Motor neuron (in vitro differentiated cells): ENCODE measurements at regions of chr16 and their contacts with region 1.

Region 1: GRCh38 chr16:52773026-52773425 is 226.1 kb upstream of the TOX3 start:
- ATAC-seq: no peak
- H3K4me3 ChIP-seq: no peak overlapping the region
- H3K27ac ChIP-seq: no peak overlapping the region
- H3K4me1 ChIP-seq: peaks cover 0 to 6% of the 10 kb centered on the region in 2 donors

Region 2: GRCh38 chr16:52861614-52862022 is 88.6 kb after region 1 on chr16:
- in situ Hi-C with region 1: loop called in 1 of 9 experiments (anchors 25 kb)
- ATAC-seq: peak in 2 of 8 experiments; percentile 48 to 52
- H3K4me3 ChIP-seq: no peak overlapping the region
- H3K27ac ChIP-seq: no peak overlapping the region
- H3K4me1 ChIP-seq: no peaks in the 10 kb centered on the region